Activated CD4-positive, alpha-beta T cell treated with anti-CD3 and anti-CD28 coated beads for 36 hours (primary cell): ENCODE measurements at regions of chr7 and their contacts with region 1.

Region 1: DNA sequence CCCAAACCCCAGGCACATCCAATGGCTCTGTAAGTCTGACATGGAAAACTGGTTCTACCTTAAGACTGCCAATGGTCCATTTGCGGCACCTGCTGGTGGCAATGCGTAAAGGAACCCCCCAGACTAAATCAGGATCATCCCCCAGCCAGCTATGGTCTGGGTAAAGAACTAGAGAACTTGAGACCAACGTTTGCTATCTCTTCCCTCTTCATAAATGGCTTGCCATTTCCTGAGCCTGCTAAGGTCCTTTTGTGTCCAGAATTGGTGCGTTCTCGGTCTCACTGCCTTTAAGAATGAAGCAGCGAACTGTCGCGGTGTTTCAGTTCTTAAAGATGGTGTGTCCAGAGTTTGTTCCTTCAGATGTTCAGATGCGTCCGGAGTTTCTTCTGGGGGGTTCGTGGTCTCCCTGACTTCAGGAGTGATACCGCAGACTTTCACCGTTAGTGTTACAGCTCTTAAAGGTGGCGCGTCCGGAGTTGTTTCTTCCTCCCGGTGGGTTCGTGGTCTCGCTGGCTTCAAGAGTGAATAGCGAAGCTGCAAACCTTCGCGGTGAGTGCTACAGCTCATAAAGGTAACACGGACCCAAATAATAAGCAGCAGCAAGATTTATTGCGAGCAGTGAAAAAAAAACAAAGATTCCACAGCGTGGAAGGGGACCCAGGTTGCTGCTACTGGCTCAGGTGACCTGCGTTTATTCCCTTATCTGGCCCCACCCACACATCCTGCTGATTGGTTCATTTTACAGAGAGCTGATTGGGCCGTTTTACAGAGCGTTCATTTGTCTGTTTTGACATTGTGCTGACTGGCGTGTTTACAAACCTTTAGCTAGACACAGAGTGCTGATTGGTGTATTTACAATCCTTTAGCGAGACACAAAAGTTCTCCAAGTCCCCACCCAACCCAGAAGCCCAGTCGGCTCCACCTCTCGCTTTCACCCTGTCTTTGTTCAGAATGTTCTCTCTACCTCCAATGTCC is 95.4 kb downstream of the ELMO1 start:
- DNase-seq: peak; percentile 83
- ATAC-seq: peak; percentile 76
- H3K4me3 Mint-ChIP-seq: peak overlapping the region; percentile 86
- H3K27ac Mint-ChIP-seq: peak overlapping the region; percentile 99
- H3K4me1 Mint-ChIP-seq: peaks cover 87% of the 10 kb centered on the region
- H3K27me3 Mint-ChIP-seq: no peaks in the 10 kb centered on the region

Region 2: DNA sequence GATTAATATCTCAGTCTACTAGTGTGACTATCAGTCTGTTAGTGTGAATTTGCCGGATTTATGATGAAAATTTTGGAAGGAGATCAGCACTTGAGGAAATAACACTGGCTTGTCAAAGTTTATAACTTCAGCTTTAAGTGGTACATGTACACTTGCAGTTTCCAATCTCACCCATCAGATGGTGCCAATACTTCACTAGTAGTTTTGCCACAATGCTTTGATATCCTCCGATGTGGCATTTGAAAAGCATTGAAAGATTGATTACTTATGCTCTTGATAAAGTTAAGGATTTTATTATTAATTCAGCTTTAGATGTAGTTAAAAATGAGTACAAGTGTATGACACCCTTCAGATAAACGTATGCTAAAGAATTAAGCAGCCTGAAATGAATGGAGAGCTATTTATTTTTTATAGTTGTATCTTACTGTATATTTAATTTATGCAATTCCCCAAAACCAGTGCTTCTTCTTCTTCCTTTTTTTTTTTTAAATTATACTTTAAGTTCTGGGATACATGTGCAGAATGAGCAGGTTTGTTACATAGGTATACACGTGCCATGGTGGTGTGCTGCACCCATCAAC is 865.4 kb before region 1 on chr7:
- CTCF ChIA-PET with region 1: no interaction called
- POLR2A ChIA-PET with region 1: no interaction called
- intact Hi-C with region 1: loop called in 1 of 2 experiments (anchors 10 kb)
- DNase-seq: peak; percentile 23
- ATAC-seq: peak; percentile 55
- H3K4me3 Mint-ChIP-seq: no peak overlapping the region
- H3K27ac Mint-ChIP-seq: no peak overlapping the region
- H3K4me1 Mint-ChIP-seq: peaks cover 2% of the 10 kb centered on the region
- H3K27me3 Mint-ChIP-seq: peaks cover 4% of the 10 kb centered on the region

Region 3: GRCh38 chr7:37208528-37208927 is 144.7 kb before region 1 on chr7:
- CTCF ChIA-PET with region 1: interaction called, 5 read pairs
- POLR2A ChIA-PET with region 1: no interaction called
- intact Hi-C with region 1: loop called (anchors 2 to 5 kb)
- DNase-seq: peak; percentile 34
- ATAC-seq: no peak
- H3K4me3 Mint-ChIP-seq: no peak overlapping the region
- H3K27ac Mint-ChIP-seq: peak overlapping the region; percentile 26
- H3K4me1 Mint-ChIP-seq: peaks cover 16% of the 10 kb centered on the region
- H3K27me3 Mint-ChIP-seq: no peaks in the 10 kb centered on the region

Region 4: GRCh38 chr7:37336259-37336658 is 17.0 kb before region 1 on chr7:
- CTCF ChIA-PET with region 1: interaction called, 50 read pairs
- POLR2A ChIA-PET with region 1: interaction called, 4 read pairs
- intact Hi-C with region 1: no loop called
- DNase-seq: peak; percentile 56
- ATAC-seq: peak; percentile 87
- H3K4me3 Mint-ChIP-seq: peak overlapping the region; percentile 39
- H3K27ac Mint-ChIP-seq: peak overlapping the region; percentile 90
- H3K4me1 Mint-ChIP-seq: peaks cover 90% of the 10 kb centered on the region
- H3K27me3 Mint-ChIP-seq: no peaks in the 10 kb centered on the region

Region 5: GRCh38 chr7:37376386-37376785 is 23.1 kb after region 1 on chr7:
- CTCF ChIA-PET with region 1: interaction called, 4 read pairs
- POLR2A ChIA-PET with region 1: interaction called, 3 read pairs
- intact Hi-C with region 1: loop called (anchors 1 to 2 kb)
- DNase-seq: peak; percentile 75
- ATAC-seq: peak; percentile 82
- H3K4me3 Mint-ChIP-seq: peak overlapping the region; percentile 9
- H3K27ac Mint-ChIP-seq: peak overlapping the region; percentile 82
- H3K4me1 Mint-ChIP-seq: peaks cover 71% of the 10 kb centered on the region
- H3K27me3 Mint-ChIP-seq: no peaks in the 10 kb centered on the region

Region 6: GRCh38 chr7:37448636-37449361 is 95.5 kb after region 1 on chr7 and contains the start of gene ELMO1:
- CTCF ChIA-PET with region 1: interaction called, 33 read pairs
- POLR2A ChIA-PET with region 1: interaction called, 6 read pairs
- intact Hi-C with region 1: loop called (anchors 1 kb)
- DNase-seq: peak; percentile 88
- ATAC-seq: peak; percentile 81
- H3K4me3 Mint-ChIP-seq: peak within 1 kb of the TSS; percentile 81
- H3K27ac Mint-ChIP-seq: peak within 1 kb of the TSS; percentile 98
- H3K4me1 Mint-ChIP-seq: peaks cover 51% of the 10 kb centered on the region
- H3K27me3 Mint-ChIP-seq: no peaks in the 10 kb centered on the region
- total RNA-seq, gene ELMO1: 96.2 to 173 TPM